Kidney (tissue), 22 donors: ENCODE measurements at regions of chr6 and their contacts with region 1.

Region 1: DNA sequence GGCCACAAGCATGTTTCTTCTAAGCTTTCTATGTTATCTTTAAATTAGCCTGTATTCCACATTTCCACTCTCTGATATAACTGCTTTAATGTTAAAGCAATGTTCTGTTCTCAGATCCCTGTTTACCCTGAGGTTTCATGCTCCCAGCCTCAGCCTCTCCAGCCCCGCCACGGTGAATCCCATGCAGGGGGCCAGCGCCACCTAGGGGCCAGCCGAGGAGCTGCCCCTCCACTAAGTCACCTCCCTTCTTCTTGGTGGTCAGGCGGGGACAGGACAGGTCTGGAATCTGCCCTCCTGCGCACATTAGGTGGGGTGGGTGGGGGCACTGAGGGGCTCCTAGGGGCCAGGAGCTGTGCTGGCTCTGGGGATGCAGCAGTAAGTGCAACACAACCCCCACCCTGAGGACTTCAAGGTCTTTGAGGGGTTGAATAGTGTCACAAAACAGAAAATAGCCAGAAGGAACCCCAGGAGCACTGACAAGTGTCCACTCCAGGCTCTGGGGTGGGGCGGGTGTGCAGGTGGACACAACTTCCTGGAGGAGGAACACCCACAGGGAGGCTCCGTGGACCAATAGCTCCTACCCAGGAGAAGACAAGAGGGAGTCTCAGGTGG is 61.6 kb downstream of the RAB44 start:
- DNase-seq: peak; percentile 86 to 92 (median 88)
- H3K4me3 ChIP-seq: no peak overlapping the region
- H3K27ac ChIP-seq: no peak overlapping the region
- H3K4me1 ChIP-seq: no peaks in the 10 kb centered on the region
- H3K27me3 ChIP-seq: no peaks in the 10 kb centered on the region
- CTCF ChIP-seq: peak; percentile 93

Region 2: GRCh38 chr6:36615018-36615761 is 144.1 kb before region 1 on chr6:
- intact Hi-C with region 1: loop called (anchors 10 kb)
- DNase-seq: no peak
- H3K4me3 ChIP-seq: no peak overlapping the region
- H3K27ac ChIP-seq: no peak overlapping the region
- H3K4me1 ChIP-seq: no peaks in the 10 kb centered on the region
- H3K27me3 ChIP-seq: no peaks in the 10 kb centered on the region
- CTCF ChIP-seq: peak; percentile 79

Region 3: DNA sequence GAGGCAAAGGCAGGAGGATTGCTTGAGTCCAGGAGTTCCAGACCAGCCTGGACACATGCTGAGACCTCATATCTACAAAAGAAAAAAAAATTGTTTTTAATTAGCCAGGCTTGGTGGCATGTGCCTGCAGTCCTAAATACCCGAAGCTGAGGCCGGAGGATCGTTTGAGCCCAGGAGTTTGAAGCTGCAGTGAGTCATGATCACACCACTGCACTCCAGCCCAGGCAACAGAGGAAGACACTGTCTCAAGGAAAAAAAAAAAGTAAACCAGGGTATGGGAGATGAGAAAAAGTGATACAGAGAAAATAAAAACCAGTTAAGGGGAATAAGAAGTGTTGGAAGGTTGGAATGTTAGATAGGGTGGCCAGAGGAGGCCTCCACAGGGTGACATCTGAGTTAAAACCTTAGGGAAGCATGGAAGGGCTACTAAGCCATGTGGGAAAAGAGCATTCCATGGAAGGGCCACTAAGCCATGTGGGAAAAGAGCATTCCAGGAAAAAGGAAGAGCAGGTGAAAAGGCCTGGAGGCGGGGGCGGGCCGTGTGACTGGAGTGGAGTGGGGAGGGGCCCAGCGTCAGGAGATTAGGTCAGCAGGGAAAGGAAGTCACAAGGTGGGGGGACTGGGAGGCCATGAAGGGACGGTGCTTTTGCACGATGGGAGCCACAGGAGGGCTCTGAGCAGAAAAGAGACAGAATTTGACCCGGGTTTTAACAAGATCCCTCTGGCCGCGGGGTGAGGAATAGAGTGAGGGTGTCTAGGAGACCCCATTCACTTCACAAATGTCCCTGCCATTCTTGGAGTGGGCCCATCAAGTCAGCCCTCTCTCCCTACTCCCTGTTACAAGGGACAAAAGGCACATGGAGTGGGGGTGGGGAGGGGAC is 61.7 kb after region 1 on chr6:
- intact Hi-C with region 1: no loop called
- DNase-seq: no peak
- H3K4me3 ChIP-seq: no peak overlapping the region
- H3K27ac ChIP-seq: peak overlapping the region in 1 of 2 donors; percentile 23
- H3K4me1 ChIP-seq: peaks cover 0 to 25% (median 13%) of the 10 kb centered on the region in 3 donors
- H3K27me3 ChIP-seq: no peaks in the 10 kb centered on the region
- CTCF ChIP-seq: no peak